Vagina (tissue), 2 donors: ENCODE measurements at regions of chr1 and their contacts with region 1.

Region 1: DNA sequence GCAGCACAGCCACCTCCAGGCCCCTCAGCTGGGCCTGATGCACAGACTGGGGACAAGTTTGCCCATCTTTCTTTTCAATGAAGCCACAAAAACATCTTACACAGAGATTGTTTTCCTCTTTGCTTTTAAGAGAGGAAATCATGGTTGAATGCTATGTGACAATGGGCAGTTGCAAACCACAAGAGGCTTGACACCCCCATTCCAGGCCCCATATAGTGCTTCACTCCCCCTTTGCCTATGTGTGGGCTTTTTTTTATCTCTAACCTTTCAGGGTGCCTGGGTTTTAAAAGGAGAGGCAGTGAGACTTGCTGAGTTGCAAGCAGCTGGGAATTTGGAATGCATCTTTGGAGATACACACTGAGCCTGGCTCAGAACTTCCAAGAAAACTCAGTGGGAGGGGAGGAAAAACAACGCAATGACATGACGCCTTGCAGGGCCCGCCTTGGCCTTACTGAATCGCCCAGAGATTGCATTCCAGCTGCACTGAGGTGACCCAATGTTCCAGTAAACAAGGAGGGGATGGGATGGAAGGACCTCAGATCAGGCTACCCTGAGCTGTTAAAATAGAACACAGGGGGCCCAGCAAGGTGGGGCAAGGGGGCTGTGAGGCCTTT is 145.2 kb upstream of the ZNF648 start:
- DNase-seq: peak in 1 of 2 donors; percentile 97
- H3K4me3 ChIP-seq: no peak overlapping the region
- H3K27ac ChIP-seq: peak overlapping the region; percentile 81
- H3K4me1 ChIP-seq: peaks cover 14% of the 10 kb centered on the region
- H3K27me3 ChIP-seq: no peaks in the 10 kb centered on the region
- CTCF ChIP-seq: no peak
- POLR2A ChIP-seq: no peak

Region 2: DNA sequence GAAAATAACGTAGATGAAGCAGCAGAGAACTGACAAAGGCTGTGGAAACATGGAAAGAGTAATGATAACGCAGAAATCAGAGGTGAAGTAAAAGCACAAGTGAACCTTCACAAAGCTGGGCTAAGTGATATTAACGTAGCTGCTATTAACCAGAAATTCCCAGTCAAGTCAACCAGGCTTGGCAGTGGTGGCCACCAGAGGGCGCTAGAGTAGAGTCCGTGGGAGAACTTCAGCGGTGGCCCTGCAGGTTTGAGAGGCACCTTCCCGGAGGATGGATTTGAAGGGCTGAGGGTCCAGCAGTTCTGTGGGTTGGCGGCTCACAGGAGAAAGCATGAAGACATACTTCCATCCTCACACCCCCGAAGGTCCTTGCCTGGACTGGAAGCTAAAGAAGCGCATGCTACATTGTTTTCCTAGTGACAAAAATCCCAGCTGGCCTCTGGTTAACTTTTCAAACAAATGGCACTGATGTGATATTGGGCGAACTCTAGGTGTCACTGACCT is 63.5 kb before region 1 on chr1:
- intact Hi-C with region 1: loop called (anchors 5 kb)
- DNase-seq: no peak
- H3K4me3 ChIP-seq: no peak overlapping the region
- H3K27ac ChIP-seq: peak overlapping the region; percentile 96
- H3K4me1 ChIP-seq: peaks cover 66% of the 10 kb centered on the region
- H3K27me3 ChIP-seq: no peaks in the 10 kb centered on the region
- CTCF ChIP-seq: peak; percentile 93 to 98 (median 96)
- POLR2A ChIP-seq: no peak

Region 3: GRCh38 chr1:182291584-182292192 is 85.0 kb after region 1 on chr1:
- intact Hi-C with region 1: loop called (anchors 5 kb)
- DNase-seq: no peak
- H3K4me3 ChIP-seq: no peak overlapping the region
- H3K27ac ChIP-seq: peak overlapping the region; percentile 76
- H3K4me1 ChIP-seq: peaks cover 28% of the 10 kb centered on the region
- H3K27me3 ChIP-seq: no peaks in the 10 kb centered on the region
- CTCF ChIP-seq: no peak
- POLR2A ChIP-seq: no peak

Region 4: GRCh38 chr1:183554577-183554976 is 1347.8 kb after region 1 on chr1:
- intact Hi-C with region 1: no loop called
- DNase-seq: no peak
- H3K4me3 ChIP-seq: no peak overlapping the region
- H3K27ac ChIP-seq: no peak overlapping the region
- H3K4me1 ChIP-seq: no peaks in the 10 kb centered on the region
- H3K27me3 ChIP-seq: no peaks in the 10 kb centered on the region
- CTCF ChIP-seq: no peak
- POLR2A ChIP-seq: no peak

Region 5: DNA sequence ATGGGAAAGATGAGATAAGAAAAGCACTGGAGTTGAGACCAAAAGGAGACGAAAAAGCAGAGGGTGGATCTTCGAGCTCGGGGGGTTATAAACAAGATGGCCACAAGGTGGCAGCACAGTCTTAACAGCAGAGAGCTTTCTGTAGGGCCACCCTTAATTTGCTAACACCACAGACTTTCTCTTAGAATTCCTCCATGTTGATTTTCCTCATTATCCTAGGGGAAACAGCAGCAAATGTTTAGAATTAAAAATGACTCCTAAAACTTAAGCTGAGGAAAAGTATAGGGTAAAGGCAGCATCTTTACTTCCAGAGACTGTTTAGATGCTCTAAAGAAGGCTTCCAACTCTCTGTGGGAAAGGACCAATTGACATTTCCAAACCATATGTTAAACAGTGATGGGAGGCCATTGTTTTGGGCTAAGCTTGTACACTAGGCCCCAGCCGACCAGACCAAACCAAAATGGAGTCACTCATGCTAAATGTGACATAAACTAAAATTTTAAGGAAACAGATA is 1448.9 kb after region 1 on chr1:
- intact Hi-C with region 1: no loop called
- DNase-seq: no peak
- H3K4me3 ChIP-seq: no peak overlapping the region
- H3K27ac ChIP-seq: no peak overlapping the region
- H3K4me1 ChIP-seq: no peaks in the 10 kb centered on the region
- H3K27me3 ChIP-seq: no peaks in the 10 kb centered on the region
- CTCF ChIP-seq: peak; percentile 80 to 87 (median 84)
- POLR2A ChIP-seq: no peak